Heart right ventricle (tissue), 16 donors: ENCODE measurements at regions of chr3 and their contacts with region 1.

Region 1: DNA sequence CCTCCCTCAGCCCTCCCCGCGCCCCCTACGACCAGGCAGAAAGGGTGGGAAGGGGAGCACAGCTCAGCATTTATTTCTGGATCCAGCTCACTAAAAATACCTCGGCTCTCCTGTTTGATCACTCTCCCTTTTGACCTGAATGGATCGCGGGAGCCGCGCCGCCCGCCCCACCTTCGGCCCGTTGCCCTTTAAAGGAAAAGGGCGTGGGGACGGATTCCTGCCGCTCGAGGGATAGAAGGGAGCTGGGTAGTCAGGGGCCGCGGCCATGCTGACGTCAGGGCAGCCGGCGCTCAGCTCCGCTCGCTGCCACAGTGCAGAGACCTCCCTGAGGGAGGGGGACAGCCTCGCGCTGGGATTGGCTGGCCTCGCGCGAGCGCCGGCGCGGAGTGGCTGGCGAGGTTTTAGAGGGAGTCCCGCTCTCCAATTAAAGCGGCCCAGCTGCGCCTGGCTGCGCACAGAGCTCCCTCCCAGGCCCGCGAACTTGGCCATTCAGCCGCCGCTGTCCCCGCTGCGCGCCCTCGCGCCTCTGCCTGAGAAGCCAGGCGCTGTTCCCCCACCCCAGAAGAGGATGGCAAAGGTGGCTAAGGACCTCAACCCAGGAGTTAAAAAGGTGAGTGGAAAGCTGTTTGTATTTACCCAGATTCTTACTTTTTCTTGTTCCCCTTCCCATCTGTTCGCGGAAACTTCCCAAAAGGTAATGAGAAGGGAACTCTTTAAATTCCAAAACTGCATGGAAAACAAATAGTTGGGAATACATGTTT is at the start of gene LMCD1:
- DNase-seq: peak; percentile 95 to 97
- ATAC-seq: peak; percentile 96 to 100 (median 97)
- H3K4me3 ChIP-seq: peak within 1 kb of the TSS; percentile 19 to 74 (median 56)
- H3K27ac ChIP-seq: peak within 1 kb of the TSS; percentile 58 to 97 (median 92)
- H3K4me1 ChIP-seq: peaks cover 10 to 80% (median 63%) of the 10 kb centered on the region in 9 donors
- H3K27me3 ChIP-seq: peaks cover 0 to 9% (median 0%) of the 10 kb centered on the region in 7 donors
- CTCF ChIP-seq: peak in 7 of 9 donors; percentile 12 to 56 (median 42)
- total RNA-seq, gene LMCD1: 28.2 to 75.7 (median 45.7) TPM

Region 2: GRCh38 chr3:8571256-8571655 is 69.7 kb after region 1 on chr3:
- intact Hi-C with region 1: loop called in 1 of 10 experiments (anchors 5 kb)
- DNase-seq: no peak
- ATAC-seq: peak in 6 of 8 donors; percentile 31 to 56 (median 50)
- H3K4me3 ChIP-seq: no peak overlapping the region
- H3K27ac ChIP-seq: peak overlapping the region in 7 of 10 donors; percentile 12 to 70 (median 36)
- H3K4me1 ChIP-seq: peaks cover 0 to 49% (median 40%) of the 10 kb centered on the region in 9 donors
- H3K27me3 ChIP-seq: no peaks in the 10 kb centered on the region
- CTCF ChIP-seq: no peak

Region 3: GRCh38 chr3:9690451-9691450 is 1189.2 kb after region 1 on chr3:
- intact Hi-C with region 1: no loop called
- DNase-seq: no peak
- ATAC-seq: peak in 7 of 8 donors; percentile 23 to 86 (median 44)
- H3K4me3 ChIP-seq: no peak overlapping the region
- H3K27ac ChIP-seq: peak overlapping the region in 1 of 10 donors; percentile 20
- H3K4me1 ChIP-seq: peaks cover 0 to 16% (median 0%) of the 10 kb centered on the region in 9 donors
- H3K27me3 ChIP-seq: no peaks in the 10 kb centered on the region
- CTCF ChIP-seq: no peak